HEK293T (cell line): ENCODE measurements at regions of chr1 and their contacts with region 1.

Region 1: DNA sequence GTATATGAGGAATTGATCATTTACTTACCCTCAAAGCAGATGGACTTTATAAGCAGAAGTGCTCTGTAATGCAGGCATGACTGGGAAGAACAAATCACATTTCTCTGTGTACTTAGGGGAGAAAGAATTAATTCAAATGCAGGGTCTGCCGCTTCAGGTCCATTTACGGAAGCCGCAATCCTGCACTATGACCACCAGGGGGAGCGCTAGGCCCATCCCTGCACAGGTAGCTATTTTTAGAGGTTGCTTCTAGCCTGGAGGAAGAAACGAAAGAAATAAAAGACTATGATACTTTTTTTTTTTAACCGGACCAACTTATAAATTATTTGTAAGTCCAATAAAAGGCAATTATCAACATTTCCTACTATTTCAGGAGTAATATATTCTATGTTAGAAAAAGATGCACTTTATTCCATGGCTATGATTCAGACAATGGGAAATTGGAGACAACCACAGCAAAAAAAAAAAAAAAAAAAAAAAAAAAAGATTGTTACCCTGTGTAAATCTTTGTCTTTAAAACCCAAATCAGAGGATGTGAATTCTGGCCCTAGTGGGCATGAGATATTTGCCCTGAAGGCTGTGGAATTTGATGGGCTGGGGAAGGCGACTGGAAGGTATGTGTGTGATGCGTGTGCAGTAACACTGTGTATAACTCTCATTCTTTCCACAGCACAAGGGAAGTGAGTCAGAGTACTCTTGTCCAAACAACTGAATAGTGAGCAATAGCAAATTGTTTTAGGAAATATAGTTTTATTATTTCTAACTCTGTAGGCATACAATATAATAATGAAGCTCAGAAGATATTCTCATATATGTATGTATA is 12.9 kb upstream of the FYB2 start:
- DNase-seq: peak; percentile 83

Region 2: GRCh38 chr1:56957931-56958330 is 125.8 kb after region 1 on chr1:
- CTCF ChIA-PET with region 1: no interaction called
- POLR2A ChIA-PET with region 1: no interaction called
- DNase-seq: no peak

Region 3: DNA sequence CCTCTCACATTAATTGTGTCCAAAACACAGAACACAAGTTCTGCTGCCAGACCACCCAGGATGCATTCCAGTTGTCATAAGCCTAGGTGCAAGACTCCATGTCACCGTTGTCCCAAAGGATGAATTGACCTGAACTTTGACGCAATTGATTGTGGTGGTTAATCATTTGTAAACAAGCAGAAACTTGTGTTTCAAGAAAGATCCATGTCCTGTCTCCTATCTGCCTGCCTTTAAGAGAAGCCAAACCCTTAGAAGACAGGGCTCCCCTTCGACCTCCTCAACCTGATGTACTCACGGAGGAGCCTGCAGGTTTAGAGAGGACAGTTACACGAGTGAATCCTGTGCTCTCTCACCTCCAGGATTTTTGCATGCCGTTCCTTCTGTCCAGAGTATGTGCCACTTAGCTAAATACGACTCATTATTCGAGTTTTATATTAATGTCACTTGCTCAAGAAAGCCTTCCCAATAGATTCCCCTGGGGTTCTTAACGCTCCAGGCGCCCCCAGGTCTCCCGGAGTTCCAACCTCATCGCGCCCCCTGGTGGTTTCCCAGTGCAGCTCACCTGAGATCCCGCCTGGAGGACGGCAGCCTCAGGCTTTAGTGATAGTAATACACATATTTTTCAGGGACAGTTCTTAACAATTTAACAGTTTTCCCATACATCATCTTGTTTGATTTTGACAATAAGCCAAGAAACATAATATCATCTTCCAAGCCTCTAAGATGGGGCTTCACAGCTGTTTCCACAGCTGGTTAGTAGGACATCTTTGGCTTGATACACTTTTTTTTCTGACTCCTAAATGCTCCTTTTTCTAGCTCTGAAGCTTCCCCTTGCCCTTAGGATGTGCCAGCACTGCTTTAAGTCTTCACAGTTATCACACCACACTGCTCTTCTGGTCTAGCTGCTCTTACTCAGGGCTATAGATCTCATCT is 136.1 kb after region 1 on chr1:
- CTCF ChIA-PET with region 1: interaction called, 11 read pairs
- POLR2A ChIA-PET with region 1: no interaction called
- DNase-seq: peak; percentile 85